ENCODE measurements at regions of chr3 and their contacts with region 1.

Region 1: GRCh38 chr3:48157950-48158376 is 30.3 kb downstream of the CDC25A start:
- DNase-seq: peak; percentile 33
- H3K4me3 ChIP-seq: no peak overlapping the region
- H3K27ac ChIP-seq: no peak overlapping the region
- H3K27me3 ChIP-seq: no peaks in the 10 kb centered on the region
- CTCF ChIP-seq: peak; percentile 83

Region 2: GRCh38 chr3:47836986-47837385 is 321.0 kb before region 1 on chr3:
- CTCF ChIA-PET with region 1: interaction called, 34 read pairs
- POLR2A ChIA-PET with region 1: interaction called, 4 read pairs
- DNase-seq: no peak
- H3K4me3 ChIP-seq: no peak overlapping the region
- H3K27ac ChIP-seq: no peak overlapping the region
- H3K27me3 ChIP-seq: no peaks in the 10 kb centered on the region
- CTCF ChIP-seq: no peak

Region 3: DNA sequence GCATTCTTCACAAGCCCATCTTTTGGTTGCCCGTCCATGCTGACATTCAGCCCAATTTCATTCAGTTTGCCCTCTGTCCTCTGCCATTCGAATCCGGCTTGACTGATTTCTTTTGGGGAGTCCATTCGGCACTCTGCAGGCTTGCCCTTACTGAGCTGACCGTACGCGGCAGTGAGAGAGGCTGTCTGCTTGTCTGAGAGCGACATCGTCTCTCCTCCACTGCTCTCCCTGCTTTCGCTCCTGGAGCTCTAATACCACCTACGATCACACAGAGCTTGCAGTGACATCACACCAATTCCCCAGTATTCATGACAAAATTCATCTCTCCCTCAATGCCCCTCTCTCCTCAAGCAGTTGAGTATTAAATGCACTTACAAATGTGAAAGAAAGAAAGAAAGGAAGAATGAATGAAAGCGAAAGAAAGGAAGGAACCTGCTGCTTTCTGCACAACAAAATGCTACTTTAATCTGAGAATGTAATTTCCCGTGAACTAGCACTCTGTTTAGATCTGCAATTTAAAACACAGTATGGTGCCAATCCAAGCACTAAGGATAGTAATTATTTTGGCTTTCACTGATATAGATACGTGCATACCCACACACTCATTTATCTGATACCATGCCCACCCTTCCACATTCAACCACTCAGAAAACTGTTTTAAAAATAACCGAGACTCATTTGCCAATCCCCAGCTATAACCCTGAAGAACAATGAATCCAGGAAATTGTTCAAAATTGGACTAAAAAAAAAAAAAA is 265.5 kb before region 1 on chr3:
- CTCF ChIA-PET with region 1: interaction called, 12 read pairs
- POLR2A ChIA-PET with region 1: no interaction called
- DNase-seq: no peak
- H3K4me3 ChIP-seq: no peak overlapping the region
- H3K27ac ChIP-seq: no peak overlapping the region
- H3K27me3 ChIP-seq: no peaks in the 10 kb centered on the region
- CTCF ChIP-seq: no peak